ENCODE measurements at regions of chr9 and their contacts with region 1.

Region 1: DNA sequence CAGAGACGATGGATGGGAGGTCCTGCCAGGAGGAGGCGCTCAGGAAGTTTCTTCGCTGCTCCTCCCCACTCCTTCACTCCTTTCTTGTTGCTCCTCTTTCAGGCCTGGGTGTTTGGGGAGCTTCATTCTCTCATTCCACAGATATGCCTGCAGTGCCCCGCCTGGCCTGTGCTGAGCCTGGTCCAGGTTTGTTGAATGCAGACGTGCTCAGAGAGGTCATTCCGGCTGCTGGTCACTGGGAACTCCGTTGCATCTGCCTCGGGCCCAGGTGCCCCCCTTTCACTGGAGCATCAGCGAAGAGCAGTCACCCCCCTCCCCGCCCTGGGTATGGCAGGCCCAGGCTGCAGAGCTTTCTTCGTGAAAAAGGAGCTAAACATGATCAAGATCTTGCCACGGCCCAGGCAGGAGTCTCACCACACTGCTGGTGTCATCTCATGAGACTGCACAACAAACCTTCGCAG is 15.5 kb downstream of the SURF6 start:
- DNase-seq: no peak
- ATAC-seq: no peak
- H3K4me3 ChIP-seq: no peak overlapping the region
- H3K27ac ChIP-seq: no peak overlapping the region
- H3K4me1 ChIP-seq: no peaks in the 10 kb centered on the region
- H3K27me3 ChIP-seq: no peaks in the 10 kb centered on the region
- CTCF ChIP-seq: no peak
- POLR2A ChIP-seq: no peak

Region 2: DNA sequence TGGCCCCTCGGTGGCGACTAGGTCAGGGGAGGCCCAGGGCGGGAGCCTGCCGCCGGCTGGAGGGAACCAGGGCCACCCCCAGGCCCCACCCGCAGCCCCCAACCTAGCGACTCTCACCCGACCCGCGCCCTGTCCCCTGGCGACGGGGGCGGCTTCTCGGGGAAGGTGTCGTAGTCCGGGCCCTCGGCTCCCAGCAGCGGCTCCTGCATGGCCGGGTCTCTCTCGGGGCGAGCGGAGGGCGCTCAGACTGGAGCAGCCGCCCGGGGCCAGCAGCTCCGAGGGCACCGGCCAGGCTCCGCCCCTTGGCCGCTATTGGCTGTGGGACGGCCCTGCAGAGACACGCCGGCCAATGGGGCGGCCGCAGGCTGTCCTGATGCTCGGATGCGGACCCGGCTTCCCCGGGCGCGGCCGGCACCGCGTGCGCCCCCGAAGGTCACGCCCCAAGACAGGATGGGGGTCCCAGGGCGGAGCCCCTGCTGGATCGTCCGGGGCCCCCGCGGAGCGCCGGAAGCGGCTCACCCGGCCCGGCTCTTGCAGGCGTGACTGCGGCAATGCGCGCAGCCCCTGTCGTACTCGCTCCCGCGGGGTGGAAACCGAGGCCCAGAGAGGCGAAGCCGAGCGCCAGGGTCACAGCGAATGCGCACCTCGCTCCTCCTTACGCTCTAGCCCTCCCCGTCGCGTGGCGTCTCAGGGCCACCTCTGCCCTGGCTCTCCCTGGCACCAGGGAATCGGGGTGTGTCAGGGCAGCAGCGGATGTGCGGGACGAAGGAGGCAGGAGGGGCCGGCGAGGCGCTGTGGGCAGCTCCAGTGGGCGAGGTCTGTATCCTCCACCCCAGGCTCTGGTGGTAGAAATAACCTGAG is 158.6 kb after region 1 on chr9 and contains the start of gene SLC2A6:
- intact Hi-C with region 1: no loop called
- DNase-seq: peak; percentile 80 to 89 (median 85)
- ATAC-seq: peak; percentile 94 to 98 (median 96)
- H3K4me3 ChIP-seq: peak within 1 kb of the TSS; percentile 44 to 53 (median 47)
- H3K27ac ChIP-seq: peak within 1 kb of the TSS in 2 of 3 donors; percentile 49 to 56
- H3K4me1 ChIP-seq: peaks cover 0 to 12% (median 0%) of the 10 kb centered on the region in 4 donors
- H3K27me3 ChIP-seq: no peaks in the 10 kb centered on the region
- CTCF ChIP-seq: no peak
- POLR2A ChIP-seq: peak; percentile 65
- total RNA-seq, gene SLC2A6: 0.88 to 6.8 (median 2.8) TPM

Region 3: GRCh38 chr9:134158753-134159392 is 838.4 kb after region 1 on chr9:
- intact Hi-C with region 1: loop called in 1 of 2 experiments (anchors 5 kb)
- DNase-seq: peak in 1 of 3 donors; percentile 33
- ATAC-seq: no peak
- H3K4me3 ChIP-seq: no peak overlapping the region
- H3K27ac ChIP-seq: no peak overlapping the region
- H3K4me1 ChIP-seq: peaks cover 0 to 10% (median 2%) of the 10 kb centered on the region in 4 donors
- H3K27me3 ChIP-seq: no peaks in the 10 kb centered on the region
- CTCF ChIP-seq: no peak
- POLR2A ChIP-seq: no peak